ENCODE measurements at regions of chr12 and their contacts with region 1.

Region 1: DNA sequence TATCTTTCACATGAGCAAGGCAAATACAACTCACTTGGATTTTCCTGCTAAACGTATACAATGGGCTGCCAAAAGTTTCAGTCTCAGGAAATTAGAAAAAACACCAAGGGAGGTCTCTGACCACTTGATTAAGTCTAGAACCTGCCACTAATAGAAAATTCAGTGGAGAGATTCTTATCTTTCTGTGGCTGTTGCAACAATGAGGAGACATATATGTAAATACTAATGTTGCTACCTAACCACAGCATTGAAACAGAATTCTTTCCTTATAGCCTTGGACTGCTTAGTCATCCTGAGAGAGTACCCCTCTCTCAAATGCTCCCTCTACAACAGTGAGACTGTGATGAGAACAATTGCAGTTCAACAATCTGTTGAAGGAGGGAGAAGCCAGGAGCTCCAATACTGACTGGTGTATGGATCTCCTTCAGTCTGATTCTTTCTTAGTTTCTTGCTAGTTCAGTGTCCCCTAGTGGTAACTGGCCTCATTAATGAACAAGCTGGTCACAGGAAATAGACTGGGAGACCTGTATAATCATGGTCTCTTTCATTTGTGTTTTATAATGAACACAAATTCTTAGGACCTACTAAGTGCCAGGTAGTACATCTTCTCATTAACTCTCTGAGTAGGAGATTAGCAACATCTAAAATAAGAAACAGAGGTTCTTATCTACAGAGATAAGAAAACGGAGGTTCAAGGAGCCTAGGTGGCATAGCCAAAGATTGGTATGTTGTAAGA is 164.5 kb downstream of the SLC38A4 start:
- DNase-seq: peak; percentile 87
- H3K4me3 ChIP-seq: peak overlapping the region; percentile 45
- H3K27ac ChIP-seq: peak overlapping the region; percentile 87
- H3K4me1 ChIP-seq: peaks cover 82% of the 10 kb centered on the region
- H3K27me3 ChIP-seq: no peaks in the 10 kb centered on the region

Region 2: DNA sequence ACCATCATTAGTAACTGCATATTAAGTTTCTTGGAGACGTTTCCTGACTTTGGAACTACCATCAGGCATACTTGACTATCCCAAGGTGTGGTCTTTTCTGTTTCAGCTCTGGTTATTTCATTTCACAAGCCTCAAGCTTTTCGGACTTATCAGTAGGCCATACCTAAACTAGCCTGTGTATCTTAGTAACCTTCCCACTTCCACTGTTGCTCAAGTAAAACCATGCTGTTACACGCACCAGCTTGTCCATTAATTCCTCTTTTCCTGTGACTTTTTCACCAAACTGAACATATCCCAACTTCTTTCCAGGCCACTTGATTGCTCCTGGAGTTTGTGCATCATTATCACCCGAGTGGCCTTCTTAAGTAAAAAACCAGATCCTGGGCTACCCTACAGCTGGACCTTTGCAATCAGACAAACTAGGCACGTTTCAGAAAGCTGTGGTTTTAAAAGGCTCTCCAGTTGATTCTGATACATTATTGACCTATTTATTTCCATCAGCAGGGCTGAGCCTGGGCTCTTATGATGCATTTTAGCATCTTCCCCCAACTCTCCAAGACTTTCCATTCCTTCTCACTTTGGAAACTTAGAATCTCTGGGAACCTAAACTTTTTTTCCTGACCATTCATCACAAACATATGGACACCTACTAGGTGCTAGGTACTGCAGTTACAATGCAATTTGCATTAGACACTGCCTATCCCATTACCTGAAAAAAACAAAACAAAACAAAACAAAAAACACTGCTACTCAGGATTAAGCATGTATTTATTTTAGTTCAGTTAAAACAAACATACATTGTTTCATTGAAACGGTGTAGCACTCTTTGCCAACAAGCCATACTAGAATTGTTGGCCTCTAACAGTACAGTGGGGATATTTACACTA is 303.6 kb before region 1 on chr12:
- in situ Hi-C with region 1: loop called (anchors 10 kb)
- DNase-seq: peak; percentile 67
- H3K4me3 ChIP-seq: no peak overlapping the region
- H3K27ac ChIP-seq: peak overlapping the region; percentile 96
- H3K4me1 ChIP-seq: peaks cover 24% of the 10 kb centered on the region
- H3K27me3 ChIP-seq: no peaks in the 10 kb centered on the region

Region 3: GRCh38 chr12:46382964-46383653 is 278.2 kb before region 1 on chr12:
- in situ Hi-C with region 1: loop called (anchors 10 kb)
- DNase-seq: peak; percentile 99
- H3K4me3 ChIP-seq: peak overlapping the region; percentile 83
- H3K27ac ChIP-seq: peak overlapping the region; percentile 100
- H3K4me1 ChIP-seq: peaks cover 50% of the 10 kb centered on the region
- H3K27me3 ChIP-seq: no peaks in the 10 kb centered on the region

Region 4: GRCh38 chr12:46395388-46395787 is 265.9 kb before region 1 on chr12:
- in situ Hi-C with region 1: no loop called
- DNase-seq: no peak
- H3K4me3 ChIP-seq: no peak overlapping the region
- H3K27ac ChIP-seq: no peak overlapping the region
- H3K4me1 ChIP-seq: peaks cover 26% of the 10 kb centered on the region
- H3K27me3 ChIP-seq: no peaks in the 10 kb centered on the region

Region 5: DNA sequence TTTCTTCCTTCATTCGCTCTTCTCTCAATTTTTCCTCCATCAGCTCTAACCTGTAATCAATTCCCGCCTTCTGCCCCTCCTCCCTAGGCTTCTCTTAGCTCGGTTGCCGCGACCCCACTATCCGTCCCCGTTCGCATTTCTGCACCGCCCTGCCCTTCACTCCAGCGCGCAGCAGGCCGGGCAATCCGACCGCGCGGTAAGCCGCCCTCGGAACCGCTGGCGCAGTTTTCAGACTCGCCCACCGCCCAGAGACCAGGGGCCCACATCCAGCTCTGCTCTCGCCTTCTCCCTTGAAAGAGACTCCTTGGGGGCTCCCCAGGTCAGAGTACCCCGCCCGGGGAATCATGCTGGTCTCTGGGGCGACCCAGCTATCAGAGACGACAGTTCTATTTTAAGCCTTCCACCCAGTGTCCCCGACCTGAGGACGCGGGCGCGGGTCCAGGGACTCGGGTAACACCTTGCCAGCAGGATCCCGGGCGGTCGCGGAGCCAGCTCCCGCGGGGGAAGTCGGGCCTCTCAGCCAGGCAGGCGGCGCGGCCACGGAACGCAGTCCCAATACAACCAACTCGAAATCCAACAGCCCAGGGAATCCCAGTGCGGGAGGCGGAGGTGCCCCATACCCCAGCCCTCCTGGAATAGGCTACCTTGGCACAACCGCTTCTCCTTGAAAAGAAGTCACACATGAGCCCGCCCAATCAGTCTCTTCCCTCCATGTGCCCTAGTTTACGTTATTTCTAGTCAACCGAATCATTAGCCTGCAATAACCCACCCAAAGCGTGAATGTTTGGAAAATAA is 170.3 kb after region 1 on chr12:
- in situ Hi-C with region 1: no loop called
- DNase-seq: peak; percentile 53
- H3K4me3 ChIP-seq: peak overlapping the region; percentile 79
- H3K27ac ChIP-seq: no peak overlapping the region
- H3K4me1 ChIP-seq: no peaks in the 10 kb centered on the region
- H3K27me3 ChIP-seq: 0 out of 2 replicates have a peak, but pooled peaks cover 5% of the 10 kb centered on the region